ENCODE measurements at regions of chr1 and their contacts with region 1.

Region 1: GRCh38 chr1:30911046-30911954 is 2.7 kb upstream of the SDC3 start:
- DNase-seq: peak; percentile 75
- H3K4me3 ChIP-seq: no peak overlapping the region
- H3K27ac ChIP-seq: no peak overlapping the region
- H3K4me1 ChIP-seq: peaks cover 6% of the 10 kb centered on the region
- H3K27me3 ChIP-seq: no peaks in the 10 kb centered on the region
- CTCF ChIP-seq: peak; percentile 81 to 88
- POLR2A ChIP-seq: no peak

Region 2: DNA sequence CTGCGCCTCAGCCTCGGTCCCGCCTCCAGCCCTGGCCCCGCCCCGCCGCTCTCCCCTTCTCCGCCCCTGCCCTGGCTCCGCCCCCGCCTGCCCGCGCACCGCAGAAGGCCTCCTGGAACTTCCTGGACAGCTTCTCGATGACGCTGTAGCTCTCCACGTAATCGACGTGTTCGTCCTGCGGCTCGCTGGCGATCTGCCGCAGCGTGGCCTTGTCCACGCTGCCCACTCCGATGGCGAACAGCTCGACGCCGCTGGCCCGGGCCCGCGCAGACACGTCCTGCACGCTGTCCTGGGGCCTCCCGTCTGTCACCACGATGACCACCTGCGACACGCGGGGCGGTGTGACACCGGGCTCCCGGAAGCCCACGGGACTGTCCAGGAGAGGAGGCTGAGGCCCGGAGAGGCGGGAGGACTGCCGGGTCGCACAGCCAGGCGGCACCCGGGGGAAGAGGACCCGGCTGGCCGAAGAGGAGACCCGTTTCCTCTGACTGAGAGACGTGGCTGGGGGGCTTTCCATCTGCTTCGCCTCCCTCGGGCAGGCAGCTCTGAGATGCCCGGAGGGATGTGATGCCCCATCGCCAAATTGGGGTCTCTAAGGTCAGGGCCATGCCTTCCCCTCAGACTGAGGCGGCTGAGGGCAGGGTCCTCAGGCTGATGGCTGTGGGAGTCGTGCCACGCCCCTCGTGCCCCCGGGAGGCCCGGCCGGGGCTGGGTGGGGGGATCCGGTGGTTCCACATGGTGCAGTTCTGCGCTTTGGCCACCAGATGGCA is 192.5 kb before region 1 on chr1:
- CTCF ChIA-PET with region 1: interaction called, 66 read pairs
- POLR2A ChIA-PET with region 1: no interaction called
- dilution Hi-C with region 1: no loop called
- intact Hi-C with region 1: loop called (anchors 1 kb)
- DNase-seq: peak; percentile 96
- H3K4me3 ChIP-seq: peak overlapping the region; percentile 10 to 66 (median 27)
- H3K27ac ChIP-seq: peak overlapping the region; percentile 78
- H3K4me1 ChIP-seq: peaks cover 5% of the 10 kb centered on the region
- H3K27me3 ChIP-seq: no peaks in the 10 kb centered on the region
- CTCF ChIP-seq: peak; percentile 92 to 94
- POLR2A ChIP-seq: peak; percentile 72

Region 3: GRCh38 chr1:30790850-30791778 is 120.2 kb before region 1 on chr1:
- CTCF ChIA-PET with region 1: interaction called, 167 read pairs
- POLR2A ChIA-PET with region 1: no interaction called
- dilution Hi-C with region 1: no loop called
- intact Hi-C with region 1: no loop called
- DNase-seq: no peak
- H3K4me3 ChIP-seq: no peak overlapping the region
- H3K27ac ChIP-seq: no peak overlapping the region
- H3K4me1 ChIP-seq: no peaks in the 10 kb centered on the region
- H3K27me3 ChIP-seq: peaks cover 1 to 9% of the 10 kb centered on the region in 2 experiments
- CTCF ChIP-seq: no peak
- POLR2A ChIP-seq: no peak

Region 4: GRCh38 chr1:30823969-30824735 is 87.1 kb before region 1 on chr1:
- CTCF ChIA-PET with region 1: interaction called, 16 read pairs
- POLR2A ChIA-PET with region 1: no interaction called
- dilution Hi-C with region 1: loop called (anchors 25 kb)
- intact Hi-C with region 1: no loop called
- DNase-seq: peak; percentile 98
- H3K4me3 ChIP-seq: peak overlapping the region in 2 of 3 experiments; percentile 39 to 40
- H3K27ac ChIP-seq: peak overlapping the region; percentile 80
- H3K4me1 ChIP-seq: peaks cover 10% of the 10 kb centered on the region
- H3K27me3 ChIP-seq: peaks cover 27% of the 10 kb centered on the region in 2 experiments
- CTCF ChIP-seq: no peak
- POLR2A ChIP-seq: peak; percentile 73

Region 5: DNA sequence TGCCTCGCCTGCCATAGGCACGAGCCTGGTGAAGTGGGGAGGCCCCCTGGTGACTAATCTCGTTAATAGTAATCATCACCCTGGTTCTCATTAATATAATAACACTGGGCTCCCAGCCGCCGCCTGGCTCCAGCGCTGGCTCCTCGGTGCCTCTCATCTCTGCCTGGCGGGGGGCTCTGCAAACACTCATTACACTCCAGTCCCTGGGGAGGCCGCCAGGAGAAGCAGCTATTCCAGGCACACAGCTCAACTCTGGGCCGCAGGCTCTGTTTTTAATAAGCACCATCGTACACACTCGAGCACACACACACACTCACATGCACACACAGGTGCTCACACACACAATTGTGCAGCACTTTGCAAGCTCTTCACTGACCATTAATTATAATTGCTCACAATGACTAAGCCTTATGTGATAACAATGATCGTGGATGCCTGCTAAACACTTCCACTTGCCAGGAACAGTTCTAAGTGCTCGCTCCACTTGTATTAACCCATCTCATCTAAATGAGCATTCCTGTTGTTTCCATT is 55.0 kb before region 1 on chr1:
- CTCF ChIA-PET with region 1: interaction called, 14 read pairs
- POLR2A ChIA-PET with region 1: no interaction called
- dilution Hi-C with region 1: no loop called
- intact Hi-C with region 1: no loop called
- DNase-seq: no peak
- H3K4me3 ChIP-seq: no peak overlapping the region
- H3K27ac ChIP-seq: no peak overlapping the region
- H3K4me1 ChIP-seq: peaks cover 3% of the 10 kb centered on the region
- H3K27me3 ChIP-seq: peaks cover 8 to 9% of the 10 kb centered on the region in 2 experiments
- CTCF ChIP-seq: peak in 1 of 2 donors; percentile 13
- POLR2A ChIP-seq: no peak

Region 6: DNA sequence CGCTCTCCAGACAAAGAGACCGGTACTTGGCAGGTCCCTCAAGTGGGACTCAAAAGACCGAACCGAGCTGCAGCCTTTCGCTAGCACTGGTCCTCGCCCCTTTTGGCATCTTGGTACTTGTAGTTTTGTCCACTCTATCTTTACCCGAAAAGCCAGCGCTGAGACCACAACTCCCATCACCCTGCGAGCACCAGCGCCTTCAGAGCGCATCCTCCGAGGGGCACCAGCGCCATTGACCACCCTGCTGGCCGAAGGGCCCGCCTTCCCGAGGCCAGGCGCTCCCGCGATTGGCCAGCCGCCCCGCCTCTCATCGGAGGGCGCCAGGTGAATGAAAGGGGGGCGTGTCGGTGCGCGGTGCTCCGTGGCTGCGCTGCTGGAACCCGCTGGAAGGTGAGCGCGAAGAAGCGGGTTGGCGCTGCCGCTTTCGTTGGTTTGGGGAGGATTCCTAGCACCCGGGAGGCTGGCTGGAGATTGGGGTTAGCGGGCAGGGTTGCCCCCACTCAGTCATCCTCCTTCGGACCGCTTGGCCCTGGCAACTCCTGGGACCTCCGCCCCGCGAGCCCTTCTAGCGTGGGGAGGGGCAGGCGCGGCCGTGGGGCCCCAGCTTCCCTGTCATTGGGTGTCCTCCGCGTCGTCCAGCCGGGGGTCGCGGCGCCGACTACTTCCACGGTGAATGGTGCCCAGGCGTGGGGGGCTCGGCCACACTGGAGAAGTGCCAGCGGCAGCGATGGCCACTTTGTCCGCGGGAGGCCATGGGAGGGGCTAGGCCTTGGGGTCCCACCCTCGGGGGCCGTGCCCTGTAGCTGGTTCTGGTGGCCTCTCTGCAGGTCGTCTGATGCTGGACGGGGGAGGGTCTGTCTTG is 1553.6 kb after region 1 on chr1 and contains the start of gene ZBTB8B:
- CTCF ChIA-PET with region 1: no interaction called
- POLR2A ChIA-PET with region 1: no interaction called
- dilution Hi-C with region 1: no loop called
- intact Hi-C with region 1: no loop called
- DNase-seq: peak; percentile 68
- H3K4me3 ChIP-seq: peak within 1 kb of the TSS; percentile 12 to 44 (median 40)
- H3K27ac ChIP-seq: no peak within 1 kb of the TSS
- H3K4me1 ChIP-seq: peaks cover 12% of the 10 kb centered on the region
- H3K27me3 ChIP-seq: peaks cover 22 to 27% of the 10 kb centered on the region in 2 experiments
- CTCF ChIP-seq: no peak
- POLR2A ChIP-seq: no peak
- total RNA-seq, gene ZBTB8B: 0.02 TPM in 1 of 2 replicates, not detected in the other

Measured in endothelial cell of umbilical vein (primary cell).